Activated CD4-positive, alpha-beta memory T cell treated with anti-CD3 and anti-CD28 coated beads, Interleukin-2, amount 10 ng/mL, durations not matched to agents 7 days and 5 days (primary cell): ENCODE measurements at regions of chr14 and their contacts with region 1.

Region 1: DNA sequence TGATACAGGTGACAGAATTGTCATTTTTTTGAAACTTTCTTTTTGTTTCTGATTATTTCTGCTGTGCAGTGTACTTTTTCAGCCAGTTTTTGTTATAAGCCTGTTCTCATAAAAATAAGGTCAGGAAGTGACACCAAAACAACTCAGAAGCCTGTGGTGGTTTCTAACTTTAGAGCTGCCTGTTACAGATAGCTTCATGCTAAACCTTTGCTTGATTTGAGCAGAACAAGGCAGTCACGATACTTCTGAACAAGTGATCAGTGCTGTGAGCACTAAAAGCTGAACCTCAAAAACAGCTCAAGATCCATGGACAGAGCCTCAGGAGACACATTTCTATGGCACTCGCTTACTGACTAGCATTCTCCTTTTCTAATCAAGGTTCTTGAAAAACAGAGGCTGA is 82.0 kb downstream of the PRKCH start:
- DNase-seq: peak; percentile 40
- H3K4me3 Mint-ChIP-seq: peak overlapping the region; percentile 28
- H3K27ac Mint-ChIP-seq: peak overlapping the region; percentile 88
- H3K4me1 Mint-ChIP-seq: peaks cover 72% of the 10 kb centered on the region
- H3K27me3 Mint-ChIP-seq: no peaks in the 10 kb centered on the region

Region 2: GRCh38 chr14:61326847-61327246 is 76.6 kb before region 1 on chr14:
- CTCF ChIA-PET with region 1: no interaction called
- POLR2A ChIA-PET with region 1: interaction called, 10 read pairs
- DNase-seq: no peak
- H3K4me3 Mint-ChIP-seq: peak overlapping the region; percentile 87
- H3K27ac Mint-ChIP-seq: peak overlapping the region; percentile 92
- H3K4me1 Mint-ChIP-seq: peaks cover 63% of the 10 kb centered on the region
- H3K27me3 Mint-ChIP-seq: no peaks in the 10 kb centered on the region